ENCODE measurements at regions of chr5 and their contacts with region 1.

Region 1: GRCh38 chr5:59039296-59040023 is 456.6 kb downstream of the RAB3C start:
- DNase-seq: peak; percentile 90 to 94 (median 91)
- H3K4me3 ChIP-seq: peak overlapping the region; percentile 84 to 93
- H3K4me3 Mint-ChIP-seq: peak overlapping the region; percentile 89 to 98 (median 96)
- H3K27ac ChIP-seq: peak overlapping the region; percentile 81
- H3K27ac Mint-ChIP-seq: peak overlapping the region; percentile 96 to 99 (median 99)
- H3K4me1 ChIP-seq: peaks cover 64% of the 10 kb centered on the region
- H3K4me1 Mint-ChIP-seq: peaks cover 39 to 79% (median 53%) of the 10 kb centered on the region in 4 donors
- H3K27me3 ChIP-seq: no peaks in the 10 kb centered on the region
- H3K27me3 Mint-ChIP-seq: no peaks in the 10 kb centered on the region

Region 2: GRCh38 chr5:58165152-58165551 is 874.3 kb before region 1 on chr5:
- CTCF ChIA-PET with region 1: no interaction called
- POLR2A ChIA-PET with region 1: no interaction called
- intact Hi-C with region 1: no loop called
- DNase-seq: no peak
- H3K4me3 ChIP-seq: no peak overlapping the region
- H3K4me3 Mint-ChIP-seq: no peak overlapping the region
- H3K27ac ChIP-seq: no peak overlapping the region
- H3K27ac Mint-ChIP-seq: no peak overlapping the region
- H3K4me1 ChIP-seq: no peaks in the 10 kb centered on the region
- H3K4me1 Mint-ChIP-seq: no peaks in the 10 kb centered on the region
- H3K27me3 ChIP-seq: no peaks in the 10 kb centered on the region
- H3K27me3 Mint-ChIP-seq: no peaks in the 10 kb centered on the region

Region 3: GRCh38 chr5:59079622-59080620 is 40.5 kb after region 1 on chr5:
- CTCF ChIA-PET with region 1: no interaction called
- POLR2A ChIA-PET with region 1: no interaction called
- intact Hi-C with region 1: loop called (anchors 10 kb)
- DNase-seq: no peak
- H3K4me3 ChIP-seq: no peak overlapping the region
- H3K4me3 Mint-ChIP-seq: no peak overlapping the region
- H3K27ac ChIP-seq: no peak overlapping the region
- H3K27ac Mint-ChIP-seq: peak overlapping the region in 2 of 7 donors; percentile 4 to 23
- H3K4me1 ChIP-seq: no peaks in the 10 kb centered on the region
- H3K4me1 Mint-ChIP-seq: no peaks in the 10 kb centered on the region
- H3K27me3 ChIP-seq: no peaks in the 10 kb centered on the region
- H3K27me3 Mint-ChIP-seq: peaks cover 1% of the 10 kb centered on the region in 2 donors

Region 4: DNA sequence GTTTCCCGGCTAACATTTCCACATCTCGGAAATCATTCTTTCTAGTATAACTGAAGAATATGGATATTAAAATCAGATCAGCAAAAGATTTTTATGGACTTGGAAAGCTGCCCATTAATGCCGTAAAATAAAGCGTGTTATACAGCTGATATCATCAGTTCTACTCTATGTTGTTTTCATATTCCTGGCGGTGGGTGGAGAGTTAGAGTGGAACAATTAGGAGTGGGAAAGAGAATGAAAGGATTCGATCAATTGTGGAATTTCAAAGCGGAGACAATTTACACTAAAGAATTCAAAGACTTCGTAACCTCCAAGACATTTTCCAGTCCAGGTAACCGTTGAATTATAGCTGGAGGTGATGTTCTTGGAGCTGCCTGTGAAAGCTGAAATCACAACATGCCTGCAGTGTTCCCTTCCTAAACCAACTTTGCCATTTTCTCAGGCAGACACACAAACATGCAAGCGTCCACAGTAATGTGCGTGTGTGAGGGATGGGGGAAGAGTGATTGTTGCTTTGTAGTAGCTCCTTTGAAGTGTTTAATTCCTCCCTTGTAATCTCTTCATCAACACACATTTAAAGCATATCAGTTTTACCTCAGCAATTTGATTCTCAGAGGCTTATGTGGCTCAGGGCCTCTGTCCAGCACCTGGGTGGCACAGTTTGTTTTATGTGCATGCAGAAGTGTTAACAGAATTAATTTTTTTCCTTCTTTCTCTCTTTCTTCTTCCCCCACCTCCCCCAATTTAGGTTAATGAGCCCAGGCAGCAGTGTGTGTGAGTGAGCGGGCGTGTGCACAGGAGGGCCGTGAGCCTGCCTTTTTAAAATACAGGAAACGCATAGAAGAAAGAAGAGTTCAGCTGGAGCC is 87.5 kb after region 1 on chr5:
- CTCF ChIA-PET with region 1: interaction called, 51 read pairs
- POLR2A ChIA-PET with region 1: interaction called, 156 read pairs
- intact Hi-C with region 1: loop called (anchors 1 kb)
- DNase-seq: peak in 1 of 5 donors; percentile 36
- H3K4me3 ChIP-seq: peak overlapping the region; percentile 19 to 34
- H3K4me3 Mint-ChIP-seq: no peak overlapping the region
- H3K27ac ChIP-seq: peak overlapping the region; percentile 80
- H3K27ac Mint-ChIP-seq: no peak overlapping the region
- H3K4me1 ChIP-seq: peaks cover 76% of the 10 kb centered on the region
- H3K4me1 Mint-ChIP-seq: peaks cover 0 to 17% (median 7%) of the 10 kb centered on the region in 4 donors
- H3K27me3 ChIP-seq: no peaks in the 10 kb centered on the region
- H3K27me3 Mint-ChIP-seq: no peaks in the 10 kb centered on the region

Region 5: DNA sequence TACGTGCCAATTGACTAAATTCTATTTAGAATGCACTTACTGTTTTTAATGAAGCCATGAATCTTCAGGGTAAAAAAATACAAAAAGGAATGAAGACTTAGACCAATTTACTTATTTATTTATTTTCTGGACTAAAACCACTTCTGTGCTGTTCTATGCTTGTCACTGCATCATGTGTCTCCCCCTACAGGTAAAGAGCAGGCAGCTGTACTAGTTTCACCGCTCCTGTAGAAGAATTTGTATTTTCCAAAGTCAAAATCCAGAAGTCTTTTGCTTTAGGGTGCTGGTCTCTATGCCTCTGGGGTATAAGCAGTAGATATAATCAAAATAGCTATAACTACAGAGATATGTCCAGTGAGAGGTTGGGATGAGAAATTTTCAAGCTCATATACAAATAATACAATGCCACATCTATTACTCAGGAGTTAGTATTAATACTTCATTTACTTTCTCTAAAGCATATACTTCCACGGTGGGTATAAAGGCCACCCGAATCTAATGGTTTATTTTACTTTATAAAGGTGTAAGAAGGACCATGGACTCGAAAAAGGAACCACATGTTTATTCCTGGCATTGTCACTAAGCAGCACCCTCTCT is 134.9 kb after region 1 on chr5:
- CTCF ChIA-PET with region 1: interaction called, 184 read pairs
- POLR2A ChIA-PET with region 1: interaction called, 22 read pairs
- intact Hi-C with region 1: loop called (anchors 1 kb)
- DNase-seq: peak; percentile 51 to 67 (median 57)
- H3K4me3 ChIP-seq: no peak overlapping the region
- H3K4me3 Mint-ChIP-seq: no peak overlapping the region
- H3K27ac ChIP-seq: no peak overlapping the region
- H3K27ac Mint-ChIP-seq: peak overlapping the region in 2 of 7 donors; percentile 5 to 12
- H3K4me1 ChIP-seq: no peaks in the 10 kb centered on the region
- H3K4me1 Mint-ChIP-seq: peaks cover 0 to 4% (median under 1%) of the 10 kb centered on the region in 4 donors
- H3K27me3 ChIP-seq: no peaks in the 10 kb centered on the region
- H3K27me3 Mint-ChIP-seq: no peaks in the 10 kb centered on the region

Region 6: DNA sequence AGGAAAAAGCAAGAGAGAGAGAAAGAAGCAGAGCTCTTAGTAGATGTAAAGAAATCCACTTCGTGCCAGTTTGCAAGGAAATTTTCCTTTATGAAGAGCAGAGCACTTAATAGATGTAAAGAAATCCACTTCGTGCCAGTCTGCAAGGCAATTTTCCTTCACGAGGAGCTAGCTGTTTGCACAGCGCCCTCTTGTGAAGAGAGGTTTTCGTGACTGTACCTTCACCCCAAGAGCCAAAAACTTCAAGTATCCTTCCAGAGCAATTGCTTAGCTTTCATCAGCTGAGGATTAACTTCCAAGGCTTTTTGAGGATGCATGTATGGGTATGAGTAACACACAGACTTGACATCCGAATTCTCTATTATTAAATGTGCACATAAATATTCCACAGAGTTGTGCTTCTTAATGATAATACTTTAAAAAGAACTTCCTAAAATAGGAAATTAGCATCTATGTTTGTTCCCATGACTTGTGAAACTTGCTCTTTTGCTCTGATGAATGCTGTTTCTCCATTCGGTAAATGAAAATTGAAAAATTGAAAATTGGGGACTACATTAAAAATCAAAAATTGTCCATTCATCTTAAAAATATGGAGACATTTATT is 328.4 kb after region 1 on chr5:
- CTCF ChIA-PET with region 1: no interaction called
- POLR2A ChIA-PET with region 1: no interaction called
- intact Hi-C with region 1: loop called (anchors 5 kb)
- DNase-seq: peak in 4 of 5 donors; percentile 22 to 33 (median 28)
- H3K4me3 ChIP-seq: no peak overlapping the region
- H3K4me3 Mint-ChIP-seq: no peak overlapping the region
- H3K27ac ChIP-seq: no peak overlapping the region
- H3K27ac Mint-ChIP-seq: no peak overlapping the region
- H3K4me1 ChIP-seq: no peaks in the 10 kb centered on the region
- H3K4me1 Mint-ChIP-seq: peaks cover 0 to 2% (median under 1%) of the 10 kb centered on the region in 4 donors
- H3K27me3 ChIP-seq: no peaks in the 10 kb centered on the region
- H3K27me3 Mint-ChIP-seq: peaks cover 11 to 14% of the 10 kb centered on the region in 2 donors